Right ventricle myocardium superior (tissue), 1 donor: ENCODE measurements at regions of chr7 and their contacts with region 1.

Region 1: GRCh38 chr7:143240291-143241168 is 18.7 kb downstream of the TAS2R40 start:
- DNase-seq: peak; percentile 60
- ATAC-seq: peak; percentile 94

Region 2: GRCh38 chr7:143305423-143306070 is 65.0 kb after region 1 on chr7:
- intact Hi-C with region 1: loop called (anchors 2 kb)
- DNase-seq: peak; percentile 85
- ATAC-seq: peak; percentile 92

Region 3: GRCh38 chr7:143380255-143380645 is 139.7 kb after region 1 on chr7:
- intact Hi-C with region 1: no loop called
- DNase-seq: peak; percentile 94
- ATAC-seq: peak; percentile 84

Region 4: GRCh38 chr7:143408686-143409561 is 168.4 kb after region 1 on chr7 and contains the start of gene EPHA1:
- intact Hi-C with region 1: loop called (anchors 5 kb)
- DNase-seq: no peak
- ATAC-seq: peak; percentile 14
- total RNA-seq, gene EPHA1: 0.08 TPM

Region 5: GRCh38 chr7:144497282-144497681 is 1256.8 kb after region 1 on chr7:
- intact Hi-C with region 1: no loop called
- DNase-seq: no peak
- ATAC-seq: no peak